Endothelial cell of umbilical vein (primary cell): ENCODE measurements at regions of chr9 and their contacts with region 1.

Region 1: GRCh38 chr9:7234143-7234542 is 476.4 kb downstream of the KDM4C start:
- DNase-seq: peak; percentile 43
- H3K4me3 ChIP-seq: no peak overlapping the region
- H3K27ac ChIP-seq: no peak overlapping the region
- H3K4me1 ChIP-seq: no peaks in the 10 kb centered on the region
- H3K27me3 ChIP-seq: peaks cover 0 to 2% of the 10 kb centered on the region in 2 experiments
- CTCF ChIP-seq: peak; percentile 57 to 65
- POLR2A ChIP-seq: no peak

Region 2: GRCh38 chr9:7223981-7224380 is 10.2 kb before region 1 on chr9:
- CTCF ChIA-PET with region 1: interaction called, 18 read pairs
- POLR2A ChIA-PET with region 1: no interaction called
- dilution Hi-C with region 1: no loop called
- intact Hi-C with region 1: no loop called
- DNase-seq: no peak
- H3K4me3 ChIP-seq: no peak overlapping the region
- H3K27ac ChIP-seq: no peak overlapping the region
- H3K4me1 ChIP-seq: no peaks in the 10 kb centered on the region
- H3K27me3 ChIP-seq: no peaks in the 10 kb centered on the region
- CTCF ChIP-seq: no peak
- POLR2A ChIP-seq: no peak

Region 3: DNA sequence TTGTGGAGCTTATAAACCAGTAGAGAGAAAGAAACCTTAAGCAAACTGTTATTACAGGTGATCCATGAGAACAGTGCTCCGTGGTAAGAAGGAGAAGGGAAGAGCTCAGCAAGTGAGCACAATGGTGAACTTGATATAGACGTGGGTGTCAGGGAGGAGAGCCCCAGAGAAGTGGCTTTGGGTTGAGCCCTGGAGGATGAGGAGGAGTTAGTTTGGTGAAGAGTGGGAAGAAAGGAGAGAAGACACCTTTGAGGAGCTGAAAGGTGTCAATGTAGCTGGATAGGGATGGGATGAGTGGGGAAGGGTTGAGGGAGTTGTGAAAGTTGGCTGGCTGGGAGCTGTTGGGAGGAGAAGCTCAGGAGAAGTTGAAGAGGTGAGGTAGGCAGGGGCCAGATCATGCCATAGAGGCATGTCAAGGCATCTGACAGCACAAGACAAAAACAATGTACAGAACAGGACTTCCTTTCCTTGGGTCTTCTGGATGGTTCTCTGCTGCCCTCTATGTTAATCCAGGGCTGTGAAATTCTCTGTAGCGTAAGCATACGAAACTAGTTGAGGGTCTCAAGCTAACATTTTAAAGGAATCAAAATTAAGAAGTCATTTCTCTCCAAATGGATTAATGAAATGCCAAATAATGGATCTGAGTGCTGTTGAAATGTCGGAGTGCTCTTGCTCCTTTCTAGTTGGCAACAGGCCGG is 25.6 kb after region 1 on chr9:
- CTCF ChIA-PET with region 1: interaction called, 14 read pairs
- POLR2A ChIA-PET with region 1: no interaction called
- dilution Hi-C with region 1: no loop called
- intact Hi-C with region 1: no loop called
- DNase-seq: no peak
- H3K4me3 ChIP-seq: no peak overlapping the region
- H3K27ac ChIP-seq: no peak overlapping the region
- H3K4me1 ChIP-seq: no peaks in the 10 kb centered on the region
- H3K27me3 ChIP-seq: no peaks in the 10 kb centered on the region
- CTCF ChIP-seq: no peak
- POLR2A ChIP-seq: no peak